H1 (cell line): ENCODE measurements at regions of chr19 and their contacts with region 1.

Region 1: DNA sequence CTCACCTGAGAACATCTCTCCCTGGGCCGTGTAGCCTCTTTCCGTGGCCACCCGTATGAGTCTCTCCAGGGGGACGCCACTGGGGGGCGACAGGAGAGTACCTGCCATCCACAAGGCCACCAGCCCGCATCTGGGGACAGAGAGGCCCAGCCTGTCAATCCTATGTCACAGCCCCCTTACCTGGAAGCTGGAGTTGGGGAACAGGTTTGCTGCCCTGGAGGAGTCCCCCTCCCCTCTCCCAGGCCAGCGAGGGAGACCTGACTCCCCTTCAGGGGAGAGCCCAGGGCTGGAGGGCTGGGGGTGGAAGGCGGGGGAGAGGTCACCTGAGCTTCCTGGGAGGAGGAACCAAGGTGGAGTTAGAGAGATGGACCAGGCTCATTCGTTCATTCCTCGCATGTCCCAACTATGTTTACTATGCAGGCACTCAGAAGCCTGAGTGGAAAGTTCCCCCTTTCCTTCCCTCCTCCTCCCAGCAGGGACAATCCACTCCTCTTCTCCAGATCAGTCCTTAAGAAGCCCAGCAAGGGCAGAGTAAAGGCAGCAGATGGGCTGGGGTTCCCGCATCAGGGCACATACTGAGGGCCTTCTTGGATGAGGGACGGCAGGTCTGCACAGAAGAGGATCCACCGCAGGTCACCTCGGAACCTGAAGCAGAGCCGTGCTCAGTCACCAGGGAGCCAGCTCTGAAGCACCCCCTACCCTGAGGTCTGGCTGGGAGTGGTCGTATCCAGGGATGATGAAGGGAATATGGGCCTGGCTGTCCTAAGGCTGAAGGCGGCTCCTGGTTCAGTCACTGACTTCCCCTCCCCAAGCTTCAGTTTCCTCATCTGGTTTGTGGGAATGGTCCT is 5.5 kb downstream of the ACTMAP start:
- DNase-seq: no peak
- H3K4me3 ChIP-seq: no peak overlapping the region
- H3K27ac ChIP-seq: peak overlapping the region; percentile 15; the same call in 1 of the 2 replicates
- H3K4me1 ChIP-seq: peaks cover 0 to 20% (median 5%) of the 10 kb centered on the region in 4 experiments; a peak in 4 of 7 replicates
- H3K27me3 ChIP-seq: no peaks in the 10 kb centered on the region
- CTCF ChIP-seq: peak; percentile 32 to 42 (median 33); a peak in 3 of 4 replicates
- EP300 ChIP-seq: no peak
- POLR2A ChIP-seq: no peak
- RAD21 ChIP-seq: peak; percentile 17 to 45; a peak in 3 of 4 replicates

Region 2: DNA sequence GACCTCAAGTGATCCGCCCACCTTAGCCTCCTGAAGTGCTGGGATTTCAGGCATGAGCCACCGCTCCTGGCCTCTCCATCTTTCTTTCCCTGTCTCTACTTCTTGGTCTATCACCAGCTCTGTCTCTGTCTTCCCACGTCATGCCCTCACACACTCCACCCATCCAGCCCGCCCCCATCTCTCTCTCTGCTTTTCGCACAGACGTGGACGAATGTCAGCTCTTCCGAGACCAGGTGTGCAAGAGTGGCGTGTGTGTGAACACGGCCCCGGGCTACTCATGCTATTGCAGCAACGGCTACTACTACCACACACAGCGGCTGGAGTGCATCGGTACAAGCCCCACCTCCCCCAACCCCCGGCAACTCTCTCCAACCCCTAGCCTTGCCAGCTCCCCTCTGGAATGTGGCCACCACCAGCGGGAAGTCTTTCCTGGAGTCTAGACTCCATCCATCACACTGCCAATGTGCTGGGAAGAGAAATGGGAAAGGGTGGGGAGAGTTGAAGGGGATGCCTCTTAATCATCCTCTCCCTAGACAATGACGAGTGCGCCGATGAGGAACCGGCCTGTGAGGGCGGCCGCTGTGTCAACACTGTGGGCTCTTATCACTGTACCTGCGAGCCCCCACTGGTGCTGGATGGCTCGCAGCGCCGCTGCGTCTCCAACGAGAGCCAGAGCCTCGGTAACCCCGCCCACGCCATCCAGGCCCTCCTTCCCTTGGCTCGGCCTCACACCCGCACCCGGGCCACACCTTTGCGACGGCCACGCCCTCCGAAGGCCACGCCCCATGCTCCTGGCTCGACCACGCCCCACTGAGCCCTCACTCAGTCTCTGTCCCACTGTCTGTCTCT is 121.2 kb before region 1 on chr19:
- CTCF ChIA-PET with region 1: no interaction called
- POLR2A ChIA-PET with region 1: no interaction called
- DNase-seq: peak in 1 of 2 experiments; percentile 100
- H3K4me3 ChIP-seq: peak overlapping the region; percentile 6 to 53 (median 42); a peak in 7 of 8 replicates
- H3K27ac ChIP-seq: no peak overlapping the region; the same call in 1 of the 2 replicates
- H3K4me1 ChIP-seq: peaks cover 0 to 18% (median 8%) of the 10 kb centered on the region in 4 experiments; a peak in 6 of 7 replicates
- H3K27me3 ChIP-seq: no peaks in the 10 kb centered on the region; a peak in 1 of 7 replicates
- CTCF ChIP-seq: peak in 1 of 3 experiments; percentile 1; a peak in 1 of 4 replicates
- EP300 ChIP-seq: no peak
- POLR2A ChIP-seq: peak in 1 of 2 experiments; percentile 63; a peak in 2 of 3 replicates
- RAD21 ChIP-seq: 0 out of 4 replicates have a peak, but pooled peaks of 1 of the 2 experiments have one; percentile 0

Region 3: DNA sequence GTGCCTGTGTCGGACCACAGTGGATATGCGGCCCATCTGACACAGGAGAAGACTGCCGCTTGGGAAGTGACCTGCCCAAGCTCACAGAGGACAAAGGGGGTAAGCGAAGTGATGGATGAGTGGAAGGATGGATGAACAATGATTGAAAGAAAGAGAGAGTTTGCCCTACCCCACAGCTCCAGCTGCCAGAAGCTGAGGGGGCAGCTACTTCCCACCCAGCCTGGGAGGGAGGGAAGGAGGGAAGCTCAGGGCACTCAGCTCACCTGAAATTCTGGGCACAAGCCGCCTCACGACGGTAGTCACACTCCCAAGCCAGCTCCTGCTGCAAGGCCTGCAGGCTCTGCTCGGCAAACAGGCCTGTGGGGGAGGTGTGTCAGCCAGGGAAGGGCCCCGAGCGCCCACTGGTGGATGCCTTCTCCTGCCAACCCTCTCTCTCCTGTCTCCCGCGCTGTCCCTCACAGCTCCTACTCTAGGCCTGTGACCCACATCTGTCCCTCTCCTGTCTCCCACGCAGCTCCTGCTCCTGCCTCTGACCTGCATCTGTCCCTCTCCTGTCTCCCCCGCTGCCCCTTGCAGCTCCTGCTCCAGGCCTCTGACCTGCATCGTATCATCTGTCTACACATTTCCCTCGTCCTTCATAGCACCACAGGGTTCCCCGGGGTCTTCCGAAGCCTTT is 42.3 kb before region 1 on chr19:
- CTCF ChIA-PET with region 1: interaction called, 15 read pairs
- POLR2A ChIA-PET with region 1: interaction called, 8 read pairs
- DNase-seq: peak in 1 of 2 experiments; percentile 84
- H3K4me3 ChIP-seq: no peak overlapping the region
- H3K27ac ChIP-seq: no peak overlapping the region; the same call in 1 of the 2 replicates
- H3K4me1 ChIP-seq: peaks cover 0 to 4% (median 1%) of the 10 kb centered on the region in 4 experiments; a peak in 5 of 7 replicates
- H3K27me3 ChIP-seq: no peaks in the 10 kb centered on the region
- CTCF ChIP-seq: peak; percentile 74 to 83 (median 75)
- EP300 ChIP-seq: no peak
- POLR2A ChIP-seq: no peak
- RAD21 ChIP-seq: peak; percentile 60 to 66

Region 4: GRCh38 chr19:40716655-40717324 is 28.0 kb before region 1 on chr19 and contains the starts of genes COQ8B and ITPKC:
- CTCF ChIA-PET with region 1: interaction called, 6 read pairs
- POLR2A ChIA-PET with region 1: interaction called, 28 read pairs
- DNase-seq: peak; percentile 90 to 100
- H3K4me3 ChIP-seq: peak within 1 kb of the TSS; percentile 72 to 94 (median 90)
- H3K27ac ChIP-seq: peak within 1 kb of the TSS; percentile 74
- H3K4me1 ChIP-seq: peaks cover 0 to 25% (median 8%) of the 10 kb centered on the region in 4 experiments; a peak in 6 of 7 replicates
- H3K27me3 ChIP-seq: no peaks in the 10 kb centered on the region
- CTCF ChIP-seq: peak in 1 of 3 experiments; percentile 3; a peak in 1 of 4 replicates
- EP300 ChIP-seq: peak; percentile 71 to 99
- POLR2A ChIP-seq: peak in 1 of 2 experiments; percentile 70; a peak in 1 of 3 replicates
- RAD21 ChIP-seq: no peak
- total RNA-seq, gene COQ8B: 39.3 and 41.7 TPM in 2 replicates
- total RNA-seq, gene ITPKC: 8.9 and 9.5 TPM in 2 replicates

Region 5: GRCh38 chr19:40721936-40722661 is 22.7 kb before region 1 on chr19:
- CTCF ChIA-PET with region 1: interaction called, 6 read pairs
- POLR2A ChIA-PET with region 1: interaction called, 28 read pairs
- DNase-seq: no peak
- H3K4me3 ChIP-seq: no peak overlapping the region
- H3K27ac ChIP-seq: no peak overlapping the region
- H3K4me1 ChIP-seq: peaks cover 0 to 10% (median 0%) of the 10 kb centered on the region in 4 experiments; a peak in 6 of 7 replicates
- H3K27me3 ChIP-seq: no peaks in the 10 kb centered on the region
- CTCF ChIP-seq: no peak
- EP300 ChIP-seq: no peak
- POLR2A ChIP-seq: no peak
- RAD21 ChIP-seq: no peak

Region 6: GRCh38 chr19:40798223-40798996 is 53.6 kb after region 1 on chr19:
- CTCF ChIA-PET with region 1: interaction called, 4 read pairs
- POLR2A ChIA-PET with region 1: interaction called, 241 read pairs
- DNase-seq: peak; percentile 99 to 100
- H3K4me3 ChIP-seq: peak overlapping the region; percentile 52 to 70 (median 64)
- H3K27ac ChIP-seq: peak overlapping the region; percentile 79
- H3K4me1 ChIP-seq: peaks cover 0 to 32% (median 19%) of the 10 kb centered on the region in 4 experiments; a peak in 6 of 7 replicates
- H3K27me3 ChIP-seq: no peaks in the 10 kb centered on the region
- CTCF ChIP-seq: peak; percentile 51 to 84 (median 59); a peak in 3 of 4 replicates
- EP300 ChIP-seq: no peak
- POLR2A ChIP-seq: peak; percentile 51 to 92
- RAD21 ChIP-seq: peak; percentile 45 to 52

Region 7: GRCh38 chr19:40806488-40807468 is 62.0 kb after region 1 on chr19:
- CTCF ChIA-PET with region 1: interaction called, 26 read pairs
- POLR2A ChIA-PET with region 1: interaction called, 241 read pairs
- DNase-seq: peak; percentile 90 to 95
- H3K4me3 ChIP-seq: peak overlapping the region in 3 of 4 experiments; percentile 22 to 35 (median 23); a peak in 3 of 8 replicates
- H3K27ac ChIP-seq: no peak overlapping the region; the same call in 1 of the 2 replicates
- H3K4me1 ChIP-seq: peaks cover 3 to 55% (median 27%) of the 10 kb centered on the region in 4 experiments
- H3K27me3 ChIP-seq: no peaks in the 10 kb centered on the region; a peak in 1 of 7 replicates
- CTCF ChIP-seq: peak; percentile 84 to 98 (median 98)
- EP300 ChIP-seq: peak; percentile 63 to 98
- POLR2A ChIP-seq: no peak; a peak in 1 of 3 replicates
- RAD21 ChIP-seq: peak; percentile 52 to 61

Region 8: GRCh38 chr19:40822161-40822560 is 77.4 kb after region 1 on chr19:
- CTCF ChIA-PET with region 1: interaction called, 16 read pairs
- POLR2A ChIA-PET with region 1: interaction called, 6 read pairs
- DNase-seq: peak in 1 of 2 experiments; percentile 41
- H3K4me3 ChIP-seq: no peak overlapping the region
- H3K27ac ChIP-seq: no peak overlapping the region
- H3K4me1 ChIP-seq: peaks cover 0 to 3% (median 1%) of the 10 kb centered on the region in 4 experiments; a peak in 3 of 7 replicates
- H3K27me3 ChIP-seq: peaks cover 0 to 3% (median 0%) of the 10 kb centered on the region in 4 experiments; a peak in 2 of 7 replicates
- CTCF ChIP-seq: no peak
- EP300 ChIP-seq: no peak
- POLR2A ChIP-seq: no peak
- RAD21 ChIP-seq: no peak

Region 9: GRCh38 chr19:40982594-40983101 is 237.9 kb after region 1 on chr19:
- CTCF ChIA-PET with region 1: no interaction called
- POLR2A ChIA-PET with region 1: no interaction called
- DNase-seq: peak; percentile 52 to 63
- H3K4me3 ChIP-seq: peak overlapping the region in 1 of 4 experiments; percentile 9; a peak in 1 of 8 replicates
- H3K27ac ChIP-seq: no peak overlapping the region
- H3K4me1 ChIP-seq: peaks cover 16 to 35% (median 23%) of the 10 kb centered on the region in 4 experiments
- H3K27me3 ChIP-seq: peaks cover 0 to 7% (median 0%) of the 10 kb centered on the region in 4 experiments; a peak in 2 of 7 replicates
- CTCF ChIP-seq: no peak
- EP300 ChIP-seq: peak in 1 of 2 experiments; percentile 64; a peak in 1 of 3 replicates
- POLR2A ChIP-seq: no peak
- RAD21 ChIP-seq: no peak